Breast epithelium (tissue), 4 donors: ENCODE measurements at regions of chr9 and their contacts with region 1.

Region 1: DNA sequence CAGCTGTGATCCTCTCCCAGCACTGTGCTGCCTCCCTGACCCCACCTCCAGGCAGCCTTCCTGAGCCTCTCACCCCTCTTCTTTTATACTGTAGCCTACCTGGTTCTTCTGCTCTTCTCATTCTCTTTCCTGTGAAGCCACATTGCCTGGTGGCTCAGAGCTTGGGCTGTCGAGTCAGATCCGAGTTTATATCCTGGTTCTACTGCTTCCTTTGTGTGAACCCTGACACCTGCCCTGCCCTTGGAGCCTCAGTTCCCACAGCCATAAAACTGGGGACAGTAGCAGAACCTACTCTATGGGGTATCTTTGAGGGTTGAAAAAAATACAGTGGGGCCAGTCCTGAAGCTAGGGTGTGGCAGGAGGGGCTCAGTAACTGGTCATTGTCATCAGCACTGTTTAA is 8.8 kb downstream of the SLC27A4 start:
- DNase-seq: no peak
- H3K4me3 ChIP-seq: no peak overlapping the region
- H3K27ac ChIP-seq: no peak overlapping the region
- H3K4me1 ChIP-seq: no peaks in the 10 kb centered on the region
- H3K27me3 ChIP-seq: no peaks in the 10 kb centered on the region
- CTCF ChIP-seq: no peak
- POLR2A ChIP-seq: no peak

Region 2: DNA sequence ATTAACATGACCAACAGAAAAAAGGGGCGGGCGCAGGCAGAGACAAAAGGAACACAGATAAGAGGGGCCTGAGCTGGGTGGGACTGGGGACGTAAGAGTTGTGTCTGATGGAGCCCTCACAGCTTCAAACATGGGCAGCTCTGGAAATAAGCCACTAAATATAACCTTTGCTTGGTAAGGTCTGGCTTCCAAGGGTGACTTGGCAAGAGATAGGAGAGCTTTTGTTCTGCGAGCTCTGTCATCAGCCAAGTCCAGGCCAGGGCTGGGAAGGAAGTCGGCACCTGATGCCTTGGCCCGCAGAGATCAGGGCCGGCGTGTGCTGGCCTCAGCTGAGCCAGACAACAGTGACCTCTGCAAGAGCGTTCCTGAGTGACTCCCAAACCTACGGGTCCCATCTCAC is 38.7 kb before region 1 on chr9:
- intact Hi-C with region 1: no loop called
- DNase-seq: no peak
- H3K4me3 ChIP-seq: no peak overlapping the region
- H3K27ac ChIP-seq: peak overlapping the region; percentile 14 to 32
- H3K4me1 ChIP-seq: no peaks in the 10 kb centered on the region
- H3K27me3 ChIP-seq: no peaks in the 10 kb centered on the region
- CTCF ChIP-seq: no peak
- POLR2A ChIP-seq: no peak

Region 3: GRCh38 chr9:128322404-128323211 is 26.5 kb before region 1 on chr9 and contains the starts of genes COQ4 and TRUB2:
- intact Hi-C with region 1: no loop called
- DNase-seq: peak; percentile 90 to 93
- H3K4me3 ChIP-seq: peak within 1 kb of the TSS; percentile 78 to 95 (median 94)
- H3K27ac ChIP-seq: peak within 1 kb of the TSS; percentile 82 to 87
- H3K4me1 ChIP-seq: peaks cover 3 to 20% of the 10 kb centered on the region in 2 donors
- H3K27me3 ChIP-seq: no peaks in the 10 kb centered on the region
- CTCF ChIP-seq: no peak
- POLR2A ChIP-seq: no peak
- total RNA-seq, gene COQ4: 30.2 to 59.7 (median 46.2) TPM
- total RNA-seq, gene TRUB2: 11.8 to 19.8 (median 18.0) TPM

Region 4: DNA sequence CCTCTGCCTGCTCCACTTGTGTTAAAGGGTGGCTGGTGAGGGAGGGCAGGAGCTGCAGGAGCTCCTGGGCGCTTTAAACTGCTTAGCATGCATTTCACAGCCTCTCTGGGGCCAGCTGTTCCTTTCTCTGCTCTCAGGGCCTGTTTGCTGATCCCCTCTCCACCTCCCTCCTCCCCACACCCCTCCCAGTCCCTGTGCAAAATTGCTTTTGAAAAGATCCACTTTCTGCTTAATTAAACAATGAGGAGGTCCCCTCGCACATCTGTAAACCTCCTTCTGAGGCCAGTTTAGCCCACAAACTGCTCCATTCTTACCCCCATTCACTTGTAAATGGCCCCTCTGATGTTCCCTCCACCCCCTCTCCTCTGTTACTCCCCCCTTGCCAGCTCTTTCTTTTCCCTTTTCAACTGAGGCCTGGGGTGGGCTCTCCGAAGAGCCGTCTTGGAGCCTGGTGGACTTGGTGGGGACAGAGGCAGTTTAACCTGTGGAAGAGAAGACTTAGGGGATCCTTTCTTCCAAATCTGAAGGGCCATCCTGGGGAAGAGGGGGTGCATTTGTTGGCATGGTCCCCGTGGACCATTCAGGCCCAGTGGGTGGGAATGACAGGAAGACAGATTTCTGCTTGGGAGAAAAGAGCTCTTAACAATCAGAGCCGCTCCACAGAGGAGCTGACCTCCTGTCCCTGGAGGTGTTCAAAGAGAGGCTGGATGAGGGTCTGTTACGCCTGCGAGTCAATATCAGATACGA is 34.1 kb after region 1 on chr9:
- intact Hi-C with region 1: loop called (anchors 2 kb)
- DNase-seq: no peak
- H3K4me3 ChIP-seq: no peak overlapping the region
- H3K27ac ChIP-seq: no peak overlapping the region
- H3K4me1 ChIP-seq: no peaks in the 10 kb centered on the region
- H3K27me3 ChIP-seq: no peaks in the 10 kb centered on the region
- CTCF ChIP-seq: no peak
- POLR2A ChIP-seq: no peak